ENCODE measurements at regions of chr1 and their contacts with region 1.

Region 1: DNA sequence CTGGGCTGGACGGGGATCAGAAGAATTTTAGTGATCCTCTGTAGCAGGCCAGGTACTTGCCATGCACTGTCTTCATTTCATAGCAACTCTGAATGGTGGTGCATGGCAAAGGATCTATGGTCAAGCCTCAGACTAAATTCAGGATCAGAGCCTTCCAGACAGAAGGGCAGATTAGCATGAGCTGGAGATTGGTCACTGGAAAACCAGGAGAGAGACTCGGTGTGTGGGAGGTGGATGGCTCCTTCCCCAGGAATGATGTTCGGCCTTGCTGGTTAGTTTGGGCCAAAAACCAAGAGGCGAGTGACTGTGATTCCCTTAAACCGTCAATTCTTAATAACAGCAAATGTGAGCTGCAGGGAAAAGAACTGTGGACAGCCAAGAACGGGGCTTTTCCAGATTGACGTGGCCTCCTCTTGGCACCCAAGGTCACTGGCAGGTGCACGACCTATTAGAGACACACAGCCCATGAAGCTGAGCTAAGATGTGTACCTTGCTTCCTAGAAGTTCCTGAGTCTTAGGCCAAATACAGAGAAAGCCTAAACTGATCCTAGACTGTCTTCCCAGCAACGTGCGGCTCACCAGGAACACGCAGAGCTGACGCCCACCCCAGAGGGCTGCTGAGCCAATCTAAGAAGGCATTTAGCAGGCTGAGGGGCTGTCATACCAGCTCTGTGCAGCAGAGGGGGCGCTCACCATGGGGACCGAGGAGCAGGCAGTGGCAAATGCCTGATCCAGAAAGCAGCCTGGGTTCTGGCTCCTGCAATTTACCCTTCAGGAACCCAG is 18.5 kb downstream of the ALDH4A1 start:
- DNase-seq: peak; percentile 50 to 79 (median 60)
- H3K4me3 ChIP-seq: no peak overlapping the region
- H3K4me3 Mint-ChIP-seq: no peak overlapping the region
- H3K27ac ChIP-seq: no peak overlapping the region
- H3K27ac Mint-ChIP-seq: no peak overlapping the region
- H3K4me1 ChIP-seq: no peaks in the 10 kb centered on the region
- H3K4me1 Mint-ChIP-seq: no peaks in the 10 kb centered on the region
- H3K27me3 ChIP-seq: no peaks in the 10 kb centered on the region
- H3K27me3 Mint-ChIP-seq: no peaks in the 10 kb centered on the region

Region 2: GRCh38 chr1:18972531-18972930 is 88.7 kb after region 1 on chr1:
- CTCF ChIA-PET with region 1: interaction called, 25 read pairs
- POLR2A ChIA-PET with region 1: no interaction called
- DNase-seq: peak in 3 of 5 donors; percentile 46 to 52 (median 47)
- H3K4me3 ChIP-seq: no peak overlapping the region
- H3K4me3 Mint-ChIP-seq: no peak overlapping the region
- H3K27ac ChIP-seq: no peak overlapping the region
- H3K27ac Mint-ChIP-seq: no peak overlapping the region
- H3K4me1 ChIP-seq: no peaks in the 10 kb centered on the region
- H3K4me1 Mint-ChIP-seq: peaks cover 2 to 5% (median 2%) of the 10 kb centered on the region in 3 donors
- H3K27me3 ChIP-seq: no peaks in the 10 kb centered on the region
- H3K27me3 Mint-ChIP-seq: peaks cover 3 to 24% of the 10 kb centered on the region in 2 donors

Region 3: DNA sequence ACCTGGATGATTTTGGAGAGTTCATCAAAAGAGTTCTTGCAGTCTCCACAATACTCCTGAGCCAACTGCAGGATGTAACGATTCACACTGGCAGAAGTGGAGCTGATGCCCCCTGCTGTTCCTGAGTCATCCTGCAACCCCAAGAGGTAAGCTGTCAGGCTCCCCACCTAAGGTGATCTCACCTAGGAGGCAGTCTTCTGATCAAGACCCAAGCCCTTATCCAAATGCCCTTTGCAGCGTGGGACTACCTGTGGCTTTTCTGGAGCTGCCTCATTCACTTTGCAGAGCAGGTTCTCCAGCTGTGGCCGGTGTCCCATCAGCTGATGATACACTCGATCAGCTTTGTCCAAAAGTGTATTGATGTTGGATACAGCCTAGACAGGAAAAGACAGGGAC is 229.9 kb after region 1 on chr1:
- CTCF ChIA-PET with region 1: interaction called, 11 read pairs
- POLR2A ChIA-PET with region 1: no interaction called
- DNase-seq: peak in 3 of 5 donors; percentile 10 to 15 (median 11)
- H3K4me3 ChIP-seq: no peak overlapping the region
- H3K4me3 Mint-ChIP-seq: no peak overlapping the region
- H3K27ac ChIP-seq: no peak overlapping the region
- H3K27ac Mint-ChIP-seq: no peak overlapping the region
- H3K4me1 ChIP-seq: no peaks in the 10 kb centered on the region
- H3K4me1 Mint-ChIP-seq: no peaks in the 10 kb centered on the region
- H3K27me3 ChIP-seq: no peaks in the 10 kb centered on the region
- H3K27me3 Mint-ChIP-seq: peaks cover 0 to 3% of the 10 kb centered on the region in 2 donors